ENCODE measurements at regions of chr18 and their contacts with region 1.

Region 1: GRCh38 chr18:79951578-79952455 is at the start of gene SLC66A2:
- DNase-seq: peak; percentile 86 to 99 (median 96)
- ATAC-seq: peak; percentile 91
- H3K4me3 ChIP-seq: peak within 1 kb of the TSS; percentile 62
- H3K4me3 Mint-ChIP-seq: peak within 1 kb of the TSS; percentile 87
- H3K27ac ChIP-seq: peak within 1 kb of the TSS in 1 of 2 donors; percentile 35
- H3K27ac Mint-ChIP-seq: peak within 1 kb of the TSS; percentile 80
- H3K4me1 ChIP-seq: peaks cover 36% of the 10 kb centered on the region
- H3K4me1 Mint-ChIP-seq: peaks cover 29% of the 10 kb centered on the region
- H3K27me3 ChIP-seq: no peaks in the 10 kb centered on the region
- H3K27me3 Mint-ChIP-seq: no peaks in the 10 kb centered on the region
- CTCF ChIP-seq: no peak
- total RNA-seq, gene SLC66A2: 44.5 to 44.8 TPM

Region 2: GRCh38 chr18:79068937-79069791 is 882.7 kb before region 1 on chr18 and contains the start of gene ATP9B:
- CTCF ChIA-PET with region 1: no interaction called
- POLR2A ChIA-PET with region 1: interaction called, 3 read pairs
- intact Hi-C with region 1: loop called in 1 of 2 experiments (anchors 10 kb)
- DNase-seq: peak; percentile 94 to 100 (median 98)
- ATAC-seq: peak; percentile 77
- H3K4me3 ChIP-seq: peak within 1 kb of the TSS; percentile 56
- H3K4me3 Mint-ChIP-seq: peak within 1 kb of the TSS; percentile 91
- H3K27ac ChIP-seq: peak within 1 kb of the TSS; percentile 97 to 98
- H3K27ac Mint-ChIP-seq: peak within 1 kb of the TSS; percentile 100
- H3K4me1 ChIP-seq: peaks cover 21% of the 10 kb centered on the region
- H3K4me1 Mint-ChIP-seq: peaks cover 60% of the 10 kb centered on the region
- H3K27me3 ChIP-seq: no peaks in the 10 kb centered on the region
- H3K27me3 Mint-ChIP-seq: peaks cover 7% of the 10 kb centered on the region
- CTCF ChIP-seq: no peak
- total RNA-seq, gene ATP9B: 61.9 to 63.5 TPM

Measured in CD4-positive, alpha-beta T cell (primary cell).